ENCODE measurements at regions of chr9 and their contacts with region 1.

Region 1: GRCh38 chr9:32579706-32580331 is 6.9 kb upstream of the NDUFB6 start:
- DNase-seq: peak; percentile 28 to 59
- ATAC-seq: peak; percentile 48 to 78; a peak in 3 of 6 replicates
- H3K4me3 ChIP-seq: no peak overlapping the region
- H3K27ac ChIP-seq: no peak overlapping the region
- H3K4me1 ChIP-seq: peaks cover 8% of the 10 kb centered on the region; the same call in 2 of the 3 replicates
- CTCF ChIP-seq: peak; percentile 97
- EP300 ChIP-seq: no peak
- POLR2A ChIP-seq: no peak
- RAD21 ChIP-seq: peak; percentile 76 to 80

Region 2: DNA sequence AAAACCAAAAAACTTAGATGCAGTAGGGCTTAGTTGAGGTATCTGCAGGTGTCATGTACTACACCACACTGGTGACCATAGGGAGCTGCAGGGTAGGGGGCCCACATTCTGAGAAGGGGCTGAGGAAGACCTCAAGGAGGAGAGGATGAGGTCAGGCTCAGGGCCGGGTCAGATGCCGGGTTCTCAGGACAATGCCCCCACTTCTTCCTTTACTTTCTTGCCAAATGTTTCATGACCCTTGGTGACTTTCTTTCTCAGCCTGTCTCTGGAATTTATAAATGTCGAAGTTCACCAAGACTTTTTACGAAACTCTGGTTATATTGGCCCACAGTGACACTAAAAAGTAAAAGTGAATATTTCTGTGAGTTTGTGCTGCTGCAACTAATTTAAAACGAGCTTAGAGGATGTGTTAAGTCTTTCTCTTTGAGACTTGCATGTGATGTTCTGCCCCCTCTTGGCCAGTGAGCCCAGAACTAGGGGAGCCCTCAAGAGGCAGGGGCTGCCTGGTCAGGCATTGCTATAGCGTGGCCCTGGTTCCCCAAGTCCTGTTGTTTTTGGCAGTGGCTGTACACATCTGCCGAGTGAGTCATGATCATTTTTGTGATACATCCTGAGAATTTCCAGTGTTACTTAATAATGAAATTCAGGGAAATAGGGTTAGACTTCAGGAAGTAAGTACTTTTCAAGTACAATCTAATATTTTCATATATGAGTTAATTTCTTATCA is 184.2 kb before region 1 on chr9:
- CTCF ChIA-PET with region 1: interaction called, 22 read pairs
- POLR2A ChIA-PET with region 1: no interaction called
- DNase-seq: peak; percentile 26 to 31
- ATAC-seq: peak; percentile 84 to 92
- H3K4me3 ChIP-seq: no peak overlapping the region
- H3K27ac ChIP-seq: peak overlapping the region; percentile 35 to 60; a peak in 4 of 6 replicates
- H3K4me1 ChIP-seq: peaks cover 26% of the 10 kb centered on the region
- CTCF ChIP-seq: no peak
- EP300 ChIP-seq: no peak
- POLR2A ChIP-seq: no peak
- RAD21 ChIP-seq: no peak

Region 3: DNA sequence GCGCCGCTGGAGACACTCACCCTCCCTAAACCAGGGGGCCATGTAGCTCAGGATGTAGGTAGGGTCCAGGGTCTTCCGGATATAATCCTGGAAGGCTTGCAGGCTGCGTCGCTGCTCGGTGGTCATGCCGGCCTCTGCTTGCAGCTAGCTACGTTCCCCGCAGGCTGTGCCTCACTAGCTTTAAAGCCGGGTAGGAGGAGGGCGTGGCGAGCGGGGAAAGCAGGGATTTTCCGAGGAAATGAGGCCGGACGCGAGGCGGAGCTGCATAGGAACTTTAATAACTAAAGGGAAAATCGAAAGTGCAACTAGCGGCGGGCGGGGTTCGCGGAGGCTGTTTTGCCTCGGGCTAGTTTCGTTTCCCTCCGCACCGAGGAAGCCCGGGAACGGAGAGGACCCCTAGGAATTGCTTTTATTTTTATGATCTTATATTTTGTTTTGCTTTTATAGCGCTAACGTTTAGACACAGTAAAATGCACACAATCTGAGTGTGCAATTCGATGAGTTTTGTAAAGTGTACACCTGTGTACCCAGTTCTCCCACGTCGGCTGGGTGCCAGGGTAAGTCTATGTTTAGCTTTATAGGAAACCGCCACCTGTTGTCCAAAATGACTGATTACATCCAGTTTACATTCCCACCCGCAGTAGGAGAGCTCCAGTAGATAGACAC is 53.6 kb before region 1 on chr9 and contains the start of gene RIGI:
- CTCF ChIA-PET with region 1: interaction called, 30 read pairs
- POLR2A ChIA-PET with region 1: interaction called, 3 read pairs
- DNase-seq: peak; percentile 64 to 85
- ATAC-seq: peak; percentile 92 to 93
- H3K4me3 ChIP-seq: peak within 1 kb of the TSS; percentile 58
- H3K27ac ChIP-seq: peak within 1 kb of the TSS; percentile 46 to 83
- H3K4me1 ChIP-seq: peaks cover 6% of the 10 kb centered on the region; the same call in 2 of the 3 replicates
- CTCF ChIP-seq: peak; percentile 71
- EP300 ChIP-seq: no peak
- POLR2A ChIP-seq: 0 out of 2 replicates have a peak, but pooled peaks have one; percentile 19
- RAD21 ChIP-seq: peak; percentile 58 to 74
- polyA plus RNA-seq, gene RIGI: 3.9 and 4.8 TPM in 2 replicates

Region 4: DNA sequence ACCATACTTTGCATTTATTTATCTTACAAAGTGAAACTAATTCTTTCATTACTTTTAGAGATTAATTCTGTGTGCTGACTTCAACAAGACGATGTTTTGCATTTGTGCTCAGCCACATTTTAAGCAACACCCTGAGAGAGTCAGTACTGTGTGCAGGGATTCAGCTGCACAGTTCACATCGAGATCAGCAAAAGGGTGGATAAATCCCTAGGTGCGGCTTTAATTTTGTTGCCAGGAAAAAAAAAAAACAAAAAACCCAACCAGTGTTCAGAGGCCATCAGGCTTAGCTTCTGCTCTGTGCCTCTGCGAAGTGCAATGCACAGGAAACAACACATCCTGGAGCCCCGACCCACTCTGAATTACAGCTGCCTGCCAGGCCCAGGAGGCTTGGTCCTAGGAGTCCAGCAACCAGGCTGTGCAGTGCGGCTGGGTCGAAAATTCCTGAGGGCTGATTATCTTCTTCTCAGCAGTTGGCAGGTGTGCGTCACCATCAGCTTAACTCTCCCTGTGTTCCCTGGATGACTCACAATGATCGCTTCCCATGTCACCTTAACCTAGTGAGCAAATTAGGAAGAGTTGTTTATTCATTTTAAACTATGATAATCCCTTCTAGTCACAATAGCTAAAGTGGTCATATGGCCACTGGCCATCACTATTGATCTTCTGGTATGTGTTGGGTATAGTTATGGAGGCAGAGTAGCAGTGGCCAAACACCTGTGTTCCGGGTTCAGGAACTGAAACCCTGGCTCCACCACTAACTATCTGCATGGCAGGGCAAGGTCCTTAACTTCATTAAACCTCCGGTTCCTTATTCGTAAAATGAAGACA is 24.3 kb after region 1 on chr9:
- CTCF ChIA-PET with region 1: interaction called, 15 read pairs
- POLR2A ChIA-PET with region 1: no interaction called
- DNase-seq: peak; percentile 41 to 42
- ATAC-seq: peak; percentile 80 to 81; a peak in 4 of 6 replicates
- H3K4me3 ChIP-seq: no peak overlapping the region
- H3K27ac ChIP-seq: peak overlapping the region in 1 of 2 experiments; percentile 21; a peak in 1 of 6 replicates
- H3K4me1 ChIP-seq: no peaks in the 10 kb centered on the region
- CTCF ChIP-seq: no peak
- EP300 ChIP-seq: no peak
- POLR2A ChIP-seq: no peak
- RAD21 ChIP-seq: no peak

Region 5: DNA sequence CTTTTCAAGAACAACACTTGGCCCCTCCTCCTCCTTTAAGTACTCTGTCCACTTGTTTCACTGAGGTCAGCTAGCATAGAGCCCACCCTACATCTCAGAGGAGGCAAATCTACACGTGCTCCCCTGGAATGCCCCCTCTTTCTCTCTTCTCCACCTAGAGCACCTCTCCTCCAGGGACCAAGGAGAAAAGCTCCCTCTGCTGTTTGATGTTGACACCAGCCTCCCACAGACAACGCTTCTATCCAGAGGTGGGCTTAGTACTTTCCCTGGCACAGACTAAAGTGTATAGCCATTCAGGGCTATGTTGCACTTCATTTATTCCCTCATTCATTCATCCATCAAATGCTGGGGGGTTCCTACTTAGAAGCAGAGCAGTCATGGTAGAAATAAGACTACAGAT is 123.8 kb after region 1 on chr9:
- CTCF ChIA-PET with region 1: interaction called, 16 read pairs
- POLR2A ChIA-PET with region 1: no interaction called
- DNase-seq: peak in 1 of 2 experiments; percentile 12
- ATAC-seq: peak in 1 of 2 experiments; percentile 78; a peak in 3 of 6 replicates
- H3K4me3 ChIP-seq: no peak overlapping the region
- H3K27ac ChIP-seq: 0 out of 6 replicates have a peak overlapping the region, but pooled peaks of 1 of the 2 experiments have one; percentile 14
- H3K4me1 ChIP-seq: 0 out of 3 replicates have a peak, but pooled peaks cover 3% of the 10 kb centered on the region
- CTCF ChIP-seq: 0 out of 3 replicates have a peak, but pooled peaks have one; percentile 32
- EP300 ChIP-seq: no peak
- POLR2A ChIP-seq: no peak
- RAD21 ChIP-seq: peak; percentile 35 to 39; a peak in 4 of 5 replicates

Region 6: DNA sequence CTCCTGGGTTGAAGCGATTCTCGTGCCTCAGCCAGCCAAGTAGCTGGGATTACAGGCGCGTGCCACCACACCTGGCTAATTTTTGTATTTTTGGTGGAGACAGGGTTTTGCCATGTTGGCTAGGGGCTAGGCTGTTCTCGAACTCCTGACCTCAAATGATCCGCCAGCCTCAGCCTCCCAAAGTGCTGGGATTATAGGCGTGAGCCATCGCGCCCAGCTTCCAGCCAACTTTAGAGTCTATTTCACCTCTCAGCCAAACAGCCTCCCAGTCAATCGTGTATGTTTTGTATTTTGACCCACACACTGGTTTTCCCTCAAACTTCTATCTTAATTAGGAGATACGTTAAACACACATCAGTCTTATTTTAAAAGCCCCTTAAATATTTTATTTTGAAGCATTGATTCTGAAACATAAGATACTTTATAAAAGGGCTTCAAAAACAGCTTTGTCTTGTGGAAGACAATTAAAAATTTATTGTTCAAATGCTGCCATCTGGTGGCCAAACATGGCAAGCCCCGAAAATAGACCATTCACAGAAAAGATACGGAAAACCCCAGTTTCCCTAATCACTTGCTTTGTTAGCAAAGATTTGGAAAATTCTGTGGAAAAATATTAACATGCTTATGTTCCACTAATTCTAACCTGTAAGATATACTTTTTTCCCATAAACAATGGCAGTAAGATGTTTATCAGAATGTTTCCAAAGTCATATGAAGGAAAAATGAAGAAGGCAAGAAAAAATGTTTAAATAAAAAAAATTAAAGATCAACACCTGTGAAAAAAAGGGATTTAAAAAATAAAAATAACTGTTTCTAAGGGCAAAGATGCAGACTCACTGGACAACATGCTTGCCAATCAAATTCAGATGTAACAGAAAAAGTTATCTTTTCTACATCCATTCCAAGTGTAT is 388.5 kb after region 1 on chr9:
- CTCF ChIA-PET with region 1: interaction called, 434 read pairs
- POLR2A ChIA-PET with region 1: interaction called, 5 read pairs
- DNase-seq: peak; percentile 30 to 33
- ATAC-seq: peak in 1 of 2 experiments; percentile 63; a peak in 3 of 6 replicates
- H3K4me3 ChIP-seq: no peak overlapping the region
- H3K27ac ChIP-seq: no peak overlapping the region
- H3K4me1 ChIP-seq: no peaks in the 10 kb centered on the region
- CTCF ChIP-seq: peak; percentile 90
- EP300 ChIP-seq: no peak
- POLR2A ChIP-seq: no peak
- RAD21 ChIP-seq: peak; percentile 82 to 85

Measured in A549 (cell line).